Stomach (tissue), 19 donors: ENCODE measurements at regions of chr1 and their contacts with region 1.

Region 1: GRCh38 chr1:145845514-145846161 is at the start of gene NUDT17:
- DNase-seq: peak; percentile 84 to 93
- H3K4me3 ChIP-seq: peak within 1 kb of the TSS; percentile 51 to 59 (median 58)
- H3K27ac ChIP-seq: peak within 1 kb of the TSS; percentile 71 to 83 (median 80)
- H3K4me1 ChIP-seq: peaks cover 11 to 21% (median 19%) of the 10 kb centered on the region in 4 donors
- H3K27me3 ChIP-seq: no peaks in the 10 kb centered on the region
- CTCF ChIP-seq: peak in 5 of 7 experiments; percentile 76 to 90 (median 82)
- EP300 ChIP-seq: no peak
- POLR2A ChIP-seq: no peak
- total RNA-seq, gene NUDT17: 3.2 to 18.3 (median 6.6) TPM in 4 of 5 donors, not detected in the other

Region 2: GRCh38 chr1:145730900-145731299 is 114.7 kb before region 1 on chr1:
- intact Hi-C with region 1: no loop called
- DNase-seq: no peak
- H3K4me3 ChIP-seq: no peak overlapping the region
- H3K27ac ChIP-seq: no peak overlapping the region
- H3K4me1 ChIP-seq: no peaks in the 10 kb centered on the region
- H3K27me3 ChIP-seq: no peaks in the 10 kb centered on the region
- CTCF ChIP-seq: no peak
- EP300 ChIP-seq: no peak
- POLR2A ChIP-seq: no peak

Region 3: GRCh38 chr1:145777357-145778145 is 68.1 kb before region 1 on chr1:
- intact Hi-C with region 1: no loop called
- DNase-seq: no peak
- H3K4me3 ChIP-seq: no peak overlapping the region
- H3K27ac ChIP-seq: peak overlapping the region in 1 of 5 donors; percentile 10
- H3K4me1 ChIP-seq: peaks cover 0 to 47% (median 29%) of the 10 kb centered on the region in 4 donors
- H3K27me3 ChIP-seq: no peaks in the 10 kb centered on the region
- CTCF ChIP-seq: no peak
- EP300 ChIP-seq: no peak
- POLR2A ChIP-seq: no peak

Region 4: DNA sequence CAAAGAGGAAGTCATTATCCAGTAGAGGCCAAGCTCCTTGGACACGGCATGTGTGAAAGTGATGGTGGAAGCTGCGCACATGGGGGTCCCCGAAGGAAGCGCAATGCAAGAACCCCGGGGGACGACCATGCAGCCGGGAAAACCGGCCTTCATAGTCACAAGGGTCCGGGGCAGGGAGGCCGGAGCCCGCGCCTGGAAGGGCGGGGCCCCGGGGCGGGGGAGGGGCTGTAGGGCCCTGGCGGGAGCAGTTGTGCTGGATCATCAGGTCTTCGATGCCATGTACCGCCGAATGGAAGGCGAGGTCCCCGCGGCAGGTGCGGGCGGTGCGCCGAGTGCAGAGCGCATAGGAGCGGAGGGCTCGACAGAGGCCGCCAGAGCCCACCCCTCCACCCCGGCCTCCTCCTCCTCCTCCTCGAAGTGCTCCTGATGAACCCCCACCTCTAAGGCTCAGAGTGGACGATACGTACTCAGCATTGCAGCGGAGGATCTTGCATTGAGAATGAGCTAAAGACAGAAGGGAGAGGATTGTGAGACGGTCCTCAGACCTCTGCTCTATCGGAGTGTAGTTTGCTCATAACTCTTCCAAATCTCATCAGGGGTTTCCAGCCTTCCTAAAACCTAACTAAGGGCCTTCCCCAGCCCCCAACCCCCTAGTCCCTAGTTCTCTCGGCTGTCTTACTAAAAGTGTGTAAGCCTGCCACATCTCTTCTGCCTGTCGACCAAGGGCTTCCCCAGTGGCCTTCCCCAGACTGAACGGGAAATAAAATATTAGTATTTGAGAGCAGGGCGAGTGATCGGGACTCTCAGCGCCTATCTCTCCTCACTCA is 173.8 kb after region 1 on chr1:
- intact Hi-C with region 1: loop called (anchors 5 kb)
- DNase-seq: peak in 1 of 2 donors; percentile 50
- H3K4me3 ChIP-seq: peak overlapping the region; percentile 24 to 39 (median 31)
- H3K27ac ChIP-seq: no peak overlapping the region
- H3K4me1 ChIP-seq: peaks cover 0 to 10% (median 9%) of the 10 kb centered on the region in 4 donors
- H3K27me3 ChIP-seq: peaks cover 0 to 58% (median 15%) of the 10 kb centered on the region in 3 donors
- CTCF ChIP-seq: no peak
- EP300 ChIP-seq: no peak
- POLR2A ChIP-seq: no peak